Activated CD8-positive, alpha-beta T cell treated with anti-CD3 and anti-CD28 coated beads for 36 hours (primary cell): ENCODE measurements at regions of chr2 and their contacts with region 1.

Region 1: GRCh38 chr2:65566620-65567019 is 134.2 kb upstream of the SPRED2 start:
- DNase-seq: no peak
- ATAC-seq: no peak
- H3K4me3 Mint-ChIP-seq: no peak overlapping the region
- H3K27ac Mint-ChIP-seq: no peak overlapping the region
- H3K4me1 Mint-ChIP-seq: no peaks in the 10 kb centered on the region
- H3K27me3 Mint-ChIP-seq: peaks cover 2% of the 10 kb centered on the region
- CTCF ChIP-seq: no peak

Region 2: GRCh38 chr2:64922482-64923384 is 643.9 kb before region 1 on chr2:
- CTCF ChIA-PET with region 1: no interaction called
- POLR2A ChIA-PET with region 1: no interaction called
- intact Hi-C with region 1: loop called (anchors 10 kb)
- DNase-seq: no peak
- ATAC-seq: no peak
- H3K4me3 Mint-ChIP-seq: no peak overlapping the region
- H3K27ac Mint-ChIP-seq: no peak overlapping the region
- H3K4me1 Mint-ChIP-seq: peaks cover 10% of the 10 kb centered on the region
- H3K27me3 Mint-ChIP-seq: no peaks in the 10 kb centered on the region
- CTCF ChIP-seq: no peak